ENCODE measurements at regions of chr22 and their contacts with region 1.

Region 1: DNA sequence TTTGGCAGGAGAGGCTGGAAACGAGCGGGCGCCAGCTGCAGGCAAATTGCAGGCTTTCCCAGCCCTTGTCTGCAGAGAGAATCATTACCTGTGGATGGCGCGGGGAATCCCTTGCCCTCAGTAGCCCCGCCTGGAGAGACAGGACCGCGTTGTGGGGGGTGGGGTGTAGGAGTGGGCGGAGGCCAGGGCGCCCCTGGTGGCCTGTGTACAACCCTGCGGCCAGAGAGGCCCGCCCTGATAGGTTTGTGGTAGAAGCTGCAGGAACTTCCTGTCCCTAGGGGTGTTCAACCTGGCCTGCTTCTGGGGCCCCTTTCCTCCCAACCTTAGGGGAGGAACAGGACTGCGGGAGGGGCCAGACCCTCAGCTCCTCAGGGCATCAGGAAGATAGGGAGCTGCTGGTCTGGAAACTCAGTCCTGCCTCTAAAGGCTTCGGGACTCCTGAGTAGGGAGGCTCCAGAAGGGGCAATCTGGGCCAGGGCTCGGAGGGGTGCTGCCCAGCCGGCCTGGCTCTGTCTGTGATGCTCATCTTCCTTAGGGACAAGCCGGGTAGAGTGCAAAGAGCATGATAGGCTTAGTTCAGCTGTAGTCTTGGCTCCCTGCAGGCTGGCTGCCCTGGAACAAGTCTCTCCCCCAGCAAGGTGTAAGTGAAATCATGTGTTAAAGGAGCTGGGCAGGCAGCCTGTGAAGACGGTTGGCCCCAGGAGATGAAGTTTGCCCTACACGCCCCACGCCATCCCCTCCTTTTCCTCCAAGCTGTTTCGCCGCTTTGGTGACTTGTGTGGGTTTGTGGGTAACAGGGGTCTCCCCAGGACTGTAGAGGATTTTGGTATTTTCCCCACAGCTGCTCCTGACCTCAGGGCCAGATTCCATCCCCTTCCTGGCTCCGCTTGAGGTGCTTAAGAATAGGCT is 24.1 kb upstream of the SUSD2 start:
- DNase-seq: peak; percentile 92
- ATAC-seq: peak; percentile 85
- H3K4me3 ChIP-seq: peak overlapping the region; percentile 73 to 99 (median 90)
- H3K4me3 Mint-ChIP-seq: peak overlapping the region; percentile 96
- H3K27ac ChIP-seq: peak overlapping the region; percentile 66 to 75
- H3K27ac Mint-ChIP-seq: peak overlapping the region; percentile 95
- H3K4me1 ChIP-seq: peaks cover 54 to 74% of the 10 kb centered on the region in 2 donors
- H3K4me1 Mint-ChIP-seq: peaks cover 63% of the 10 kb centered on the region
- H3K27me3 ChIP-seq: no peaks in the 10 kb centered on the region
- H3K27me3 Mint-ChIP-seq: no peaks in the 10 kb centered on the region
- CTCF ChIP-seq: peak; percentile 88

Region 2: DNA sequence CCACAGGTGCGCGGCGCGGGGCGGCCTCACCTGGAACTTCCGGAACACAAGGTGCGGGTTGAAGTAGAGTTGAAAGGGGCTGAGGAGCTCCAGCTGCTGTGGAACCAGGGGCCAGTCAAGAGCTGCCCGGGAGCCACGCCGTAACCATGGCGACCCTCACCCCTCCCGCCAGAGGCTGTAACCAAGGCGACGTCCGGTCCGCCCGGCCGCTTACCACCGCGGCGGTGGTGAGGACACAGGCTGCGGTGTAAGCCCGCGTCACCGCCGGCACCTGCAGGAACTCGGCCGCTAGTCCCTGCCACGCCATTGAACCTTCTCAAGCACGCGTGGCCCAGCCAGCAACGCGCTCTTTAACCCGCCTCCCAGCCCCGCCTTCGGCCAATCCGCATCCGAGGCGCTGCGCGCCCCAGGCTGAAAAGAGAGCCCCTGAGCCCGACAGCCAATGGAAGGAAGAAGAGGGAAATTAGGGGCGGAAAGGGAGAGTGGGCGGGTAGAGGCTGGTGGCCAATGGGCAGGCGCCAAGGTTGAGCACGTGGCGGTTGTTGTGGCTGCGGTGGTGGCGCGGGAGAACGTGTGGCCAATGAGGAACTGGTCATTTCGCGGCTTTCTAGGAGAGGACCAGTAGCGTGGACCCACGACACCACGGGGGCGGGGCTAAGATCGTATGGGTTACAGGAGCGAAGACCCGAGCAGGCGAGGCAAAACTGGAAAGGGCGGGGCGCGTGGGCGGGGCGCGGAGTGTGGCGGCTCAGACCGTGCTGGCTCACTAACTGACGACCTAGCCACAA is 318.3 kb before region 1 on chr22 and contains the start of gene DERL3:
- CTCF ChIA-PET with region 1: no interaction called
- POLR2A ChIA-PET with region 1: no interaction called
- intact Hi-C with region 1: loop called (anchors 2 kb)
- DNase-seq: peak; percentile 100
- ATAC-seq: peak; percentile 78
- H3K4me3 ChIP-seq: peak within 1 kb of the TSS; percentile 38 to 83 (median 69)
- H3K4me3 Mint-ChIP-seq: peak within 1 kb of the TSS; percentile 89
- H3K27ac ChIP-seq: peak within 1 kb of the TSS; percentile 98
- H3K27ac Mint-ChIP-seq: peak within 1 kb of the TSS; percentile 99
- H3K4me1 ChIP-seq: peaks cover 45 to 60% of the 10 kb centered on the region in 2 donors
- H3K4me1 Mint-ChIP-seq: peaks cover 73% of the 10 kb centered on the region
- H3K27me3 ChIP-seq: no peaks in the 10 kb centered on the region
- H3K27me3 Mint-ChIP-seq: no peaks in the 10 kb centered on the region
- CTCF ChIP-seq: no peak
- total RNA-seq, gene DERL3: 74.1 and 77.0 TPM in 2 replicates

Region 3: GRCh38 chr22:24011735-24012068 is 145.5 kb before region 1 on chr22:
- CTCF ChIA-PET with region 1: interaction called, 27 read pairs
- POLR2A ChIA-PET with region 1: interaction called, 9 read pairs
- intact Hi-C with region 1: loop called (anchors 1 kb)
- DNase-seq: no peak
- ATAC-seq: no peak
- H3K4me3 ChIP-seq: peak overlapping the region; percentile 77 to 88 (median 86)
- H3K4me3 Mint-ChIP-seq: peak overlapping the region; percentile 95
- H3K27ac ChIP-seq: peak overlapping the region in 1 of 2 donors; percentile 80
- H3K27ac Mint-ChIP-seq: peak overlapping the region; percentile 95
- H3K4me1 ChIP-seq: peaks cover 7 to 18% of the 10 kb centered on the region in 2 donors
- H3K4me1 Mint-ChIP-seq: peaks cover 28% of the 10 kb centered on the region
- H3K27me3 ChIP-seq: no peaks in the 10 kb centered on the region
- H3K27me3 Mint-ChIP-seq: no peaks in the 10 kb centered on the region
- CTCF ChIP-seq: no peak

Region 4: DNA sequence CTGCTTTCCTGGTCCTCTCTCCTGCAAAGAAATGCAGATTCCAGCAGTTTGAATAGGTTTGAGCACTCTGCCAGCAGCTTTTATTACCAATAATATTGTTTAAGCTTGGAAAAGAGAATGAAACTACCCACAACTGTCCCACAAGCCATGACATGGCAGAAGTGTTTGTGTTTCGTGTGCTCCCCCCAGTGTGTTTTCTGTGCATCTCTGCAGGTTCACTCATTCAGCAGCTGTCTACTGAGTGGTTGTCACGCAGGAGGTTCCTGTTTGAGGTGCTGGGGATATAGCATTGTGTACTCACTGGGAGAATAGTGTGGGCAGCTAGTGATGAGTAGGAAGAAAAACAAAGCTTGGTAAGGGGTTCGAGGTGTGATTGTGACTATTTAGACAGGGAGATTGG is 31.2 kb before region 1 on chr22:
- CTCF ChIA-PET with region 1: interaction called, 23 read pairs
- POLR2A ChIA-PET with region 1: no interaction called
- intact Hi-C with region 1: no loop called
- DNase-seq: no peak
- ATAC-seq: no peak
- H3K4me3 ChIP-seq: no peak overlapping the region
- H3K4me3 Mint-ChIP-seq: no peak overlapping the region
- H3K27ac ChIP-seq: no peak overlapping the region
- H3K27ac Mint-ChIP-seq: no peak overlapping the region
- H3K4me1 ChIP-seq: peaks cover 10 to 20% of the 10 kb centered on the region in 2 donors
- H3K4me1 Mint-ChIP-seq: peaks cover 23% of the 10 kb centered on the region
- H3K27me3 ChIP-seq: no peaks in the 10 kb centered on the region
- H3K27me3 Mint-ChIP-seq: no peaks in the 10 kb centered on the region
- CTCF ChIP-seq: no peak

Region 5: DNA sequence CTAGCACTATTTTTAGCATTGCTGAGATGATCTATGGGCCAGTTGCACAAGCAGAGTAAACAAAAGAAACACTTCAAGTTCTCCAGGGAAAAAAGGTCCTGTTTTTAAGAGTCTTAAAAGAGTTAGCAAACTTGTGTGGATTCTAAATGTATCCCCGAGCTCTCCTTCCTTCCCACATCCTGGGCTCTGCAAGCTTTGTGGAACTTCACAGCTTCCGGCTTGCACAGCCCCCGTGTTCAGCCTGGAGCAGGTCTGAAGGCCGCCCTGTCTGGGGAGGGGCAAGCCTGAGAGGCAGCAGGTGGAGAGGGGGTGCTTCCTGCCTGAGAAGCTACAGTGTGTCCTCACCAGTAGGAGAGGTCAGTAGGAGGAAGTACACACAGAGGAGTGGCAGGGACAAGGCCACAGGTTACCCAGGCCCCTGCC is 11.0 kb before region 1 on chr22:
- CTCF ChIA-PET with region 1: interaction called, 48 read pairs
- POLR2A ChIA-PET with region 1: no interaction called
- intact Hi-C with region 1: no loop called
- DNase-seq: peak; percentile 37
- ATAC-seq: peak; percentile 78
- H3K4me3 ChIP-seq: peak overlapping the region in 1 of 5 experiments; percentile 19
- H3K4me3 Mint-ChIP-seq: peak overlapping the region; percentile 33
- H3K27ac ChIP-seq: peak overlapping the region; percentile 26 to 72
- H3K27ac Mint-ChIP-seq: peak overlapping the region; percentile 69
- H3K4me1 ChIP-seq: peaks cover 30 to 45% of the 10 kb centered on the region in 2 donors
- H3K4me1 Mint-ChIP-seq: peaks cover 44% of the 10 kb centered on the region
- H3K27me3 ChIP-seq: no peaks in the 10 kb centered on the region
- H3K27me3 Mint-ChIP-seq: no peaks in the 10 kb centered on the region
- CTCF ChIP-seq: no peak

Region 6: GRCh38 chr22:24270638-24271408 is 113.7 kb after region 1 on chr22 and contains the start of gene SPECC1L:
- CTCF ChIA-PET with region 1: no interaction called
- POLR2A ChIA-PET with region 1: no interaction called
- intact Hi-C with region 1: loop called (anchors 1 kb)
- DNase-seq: peak; percentile 96
- ATAC-seq: peak; percentile 93
- H3K4me3 ChIP-seq: peak within 1 kb of the TSS; percentile 75 to 92 (median 78)
- H3K4me3 Mint-ChIP-seq: peak within 1 kb of the TSS; percentile 88
- H3K27ac ChIP-seq: peak within 1 kb of the TSS; percentile 76 to 84
- H3K27ac Mint-ChIP-seq: peak within 1 kb of the TSS; percentile 91
- H3K4me1 ChIP-seq: peaks cover 21 to 39% of the 10 kb centered on the region in 2 donors
- H3K4me1 Mint-ChIP-seq: peaks cover 39% of the 10 kb centered on the region
- H3K27me3 ChIP-seq: no peaks in the 10 kb centered on the region
- H3K27me3 Mint-ChIP-seq: no peaks in the 10 kb centered on the region
- CTCF ChIP-seq: no peak
- total RNA-seq, gene SPECC1L: 81.4 and 85.3 TPM in 2 replicates

Region 7: DNA sequence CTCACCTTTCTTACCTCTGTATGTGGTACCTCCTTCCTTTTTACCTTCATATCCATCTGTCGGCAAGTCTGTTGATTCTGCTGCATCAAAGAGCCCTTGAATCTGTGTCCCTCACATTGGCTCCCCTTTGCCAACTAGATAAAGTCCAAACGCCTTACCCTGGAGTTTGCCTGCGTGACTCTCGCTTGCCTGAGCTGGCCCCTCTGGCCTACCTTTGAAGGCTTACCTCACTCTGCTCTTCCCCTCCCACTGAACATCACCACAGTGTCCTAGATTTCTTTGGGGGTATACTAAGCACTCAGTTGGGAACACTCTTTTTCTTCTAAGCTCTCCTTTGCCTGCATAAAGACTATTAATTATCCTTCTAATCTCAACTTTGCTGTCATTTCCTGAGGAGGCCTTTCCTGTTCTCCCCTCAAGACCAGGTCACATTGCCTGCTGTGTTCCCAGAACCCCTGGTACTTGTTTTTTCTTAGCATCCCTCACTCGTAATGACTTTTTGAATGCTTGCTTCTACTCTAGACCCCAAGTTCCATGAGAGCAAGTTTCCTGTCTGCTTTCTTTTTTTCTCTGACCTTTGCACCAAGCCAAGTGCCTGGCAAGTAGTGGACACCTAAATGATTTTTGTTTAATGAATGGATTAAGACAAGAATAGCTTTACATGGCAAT is 202.4 kb after region 1 on chr22:
- CTCF ChIA-PET with region 1: no interaction called
- POLR2A ChIA-PET with region 1: no interaction called
- intact Hi-C with region 1: no loop called
- DNase-seq: no peak
- ATAC-seq: no peak
- H3K4me3 ChIP-seq: no peak overlapping the region
- H3K4me3 Mint-ChIP-seq: no peak overlapping the region
- H3K27ac ChIP-seq: no peak overlapping the region
- H3K27ac Mint-ChIP-seq: no peak overlapping the region
- H3K4me1 ChIP-seq: no peaks in the 10 kb centered on the region
- H3K4me1 Mint-ChIP-seq: no peaks in the 10 kb centered on the region
- H3K27me3 ChIP-seq: no peaks in the 10 kb centered on the region
- H3K27me3 Mint-ChIP-seq: no peaks in the 10 kb centered on the region
- CTCF ChIP-seq: no peak

Measured in B cell (primary cell).